Ovary (tissue), 10 donors: ENCODE measurements at regions of chr9 and their contacts with region 1.

Region 1: DNA sequence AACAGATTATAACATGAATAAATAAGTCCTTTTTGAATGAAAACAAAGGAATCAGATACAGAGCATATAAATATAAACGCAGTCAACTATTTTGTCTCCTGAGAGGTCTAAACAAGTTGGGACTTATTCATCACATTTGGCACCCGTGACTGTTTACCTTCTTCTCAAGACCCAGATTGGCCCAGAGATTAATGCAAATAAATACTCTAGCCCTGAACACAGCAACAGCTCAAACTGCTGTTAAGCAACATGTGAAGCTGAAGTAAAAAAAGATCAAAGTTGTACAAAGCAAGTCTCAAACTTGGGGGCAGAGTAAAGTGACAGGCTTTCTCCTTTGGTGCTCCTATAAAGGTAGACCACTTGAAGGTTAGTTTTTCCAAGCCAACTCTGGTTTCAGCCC is 95.0 kb upstream of the NR5A1 start:
- DNase-seq: no peak
- H3K4me3 ChIP-seq: no peak overlapping the region
- H3K27ac ChIP-seq: no peak overlapping the region
- H3K4me1 ChIP-seq: no peaks in the 10 kb centered on the region
- H3K27me3 ChIP-seq: no peaks in the 10 kb centered on the region
- CTCF ChIP-seq: no peak
- EP300 ChIP-seq: no peak
- POLR2A ChIP-seq: no peak

Region 2: GRCh38 chr9:123863164-123863855 is 738.9 kb before region 1 on chr9:
- intact Hi-C with region 1: loop called in 1 of 4 experiments (anchors 10 kb)
- DNase-seq: no peak
- H3K4me3 ChIP-seq: no peak overlapping the region
- H3K27ac ChIP-seq: no peak overlapping the region
- H3K4me1 ChIP-seq: no peaks in the 10 kb centered on the region
- H3K27me3 ChIP-seq: no peaks in the 10 kb centered on the region
- CTCF ChIP-seq: no peak
- EP300 ChIP-seq: no peak
- POLR2A ChIP-seq: no peak

Region 3: GRCh38 chr9:124735121-124735520 is 132.9 kb after region 1 on chr9:
- intact Hi-C with region 1: no loop called
- DNase-seq: no peak
- H3K4me3 ChIP-seq: no peak overlapping the region
- H3K27ac ChIP-seq: no peak overlapping the region
- H3K4me1 ChIP-seq: no peaks in the 10 kb centered on the region
- H3K27me3 ChIP-seq: no peaks in the 10 kb centered on the region
- CTCF ChIP-seq: no peak
- EP300 ChIP-seq: no peak
- POLR2A ChIP-seq: no peak